PC-9 (cell line): ENCODE measurements at regions of chr5 and their contacts with region 1.

Region 1: GRCh38 chr5:32852535-32852934 is 141.4 kb downstream of the NPR3 start:
- DNase-seq: peak in 1 of 2 experiments; percentile 91
- H3K4me3 ChIP-seq: no peak overlapping the region
- H3K27ac ChIP-seq: no peak overlapping the region
- H3K4me1 ChIP-seq: peaks cover 6% of the 10 kb centered on the region; the same call in 1 of the 2 replicates
- H3K27me3 ChIP-seq: peaks cover 10% of the 10 kb centered on the region; the same call in 1 of the 2 replicates
- CTCF ChIP-seq: peak; percentile 66

Region 2: GRCh38 chr5:32642276-32643002 is 210.1 kb before region 1 on chr5:
- CTCF ChIA-PET with region 1: no interaction called
- POLR2A ChIA-PET with region 1: no interaction called
- intact Hi-C with region 1: loop called (anchors 2 kb)
- DNase-seq: peak in 1 of 2 experiments; percentile 79
- H3K4me3 ChIP-seq: peak overlapping the region; percentile 28
- H3K27ac ChIP-seq: peak overlapping the region; percentile 39
- H3K4me1 ChIP-seq: peaks cover 22% of the 10 kb centered on the region
- H3K27me3 ChIP-seq: no peaks in the 10 kb centered on the region
- CTCF ChIP-seq: no peak

Region 3: DNA sequence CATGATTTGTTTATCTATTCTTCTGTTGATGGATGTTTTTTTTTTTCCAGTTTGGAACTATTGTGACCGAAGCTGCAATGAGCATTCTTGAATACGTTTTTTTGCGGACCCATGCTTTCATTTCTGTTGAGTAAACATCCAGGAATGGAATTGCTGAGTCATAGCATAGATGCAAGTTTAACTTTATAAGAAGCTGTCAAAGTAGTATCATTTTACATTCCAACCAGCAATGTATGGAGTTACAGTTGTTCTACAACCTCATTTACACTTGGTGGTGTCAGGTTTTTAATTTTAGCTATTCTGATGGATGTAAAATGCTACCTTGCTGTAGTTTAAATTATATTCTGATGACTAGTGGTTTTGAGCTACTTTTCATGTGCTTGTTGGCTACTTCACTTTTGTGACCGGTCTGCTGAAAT is 92.4 kb before region 1 on chr5:
- CTCF ChIA-PET with region 1: interaction called, 3 read pairs
- POLR2A ChIA-PET with region 1: no interaction called
- intact Hi-C with region 1: loop called (anchors 1 kb)
- DNase-seq: peak; percentile 38 to 73
- H3K4me3 ChIP-seq: peak overlapping the region; percentile 23; the same call in 1 of the 2 replicates
- H3K27ac ChIP-seq: peak overlapping the region; percentile 53
- H3K4me1 ChIP-seq: peaks cover 17% of the 10 kb centered on the region
- H3K27me3 ChIP-seq: no peaks in the 10 kb centered on the region
- CTCF ChIP-seq: no peak

Region 4: DNA sequence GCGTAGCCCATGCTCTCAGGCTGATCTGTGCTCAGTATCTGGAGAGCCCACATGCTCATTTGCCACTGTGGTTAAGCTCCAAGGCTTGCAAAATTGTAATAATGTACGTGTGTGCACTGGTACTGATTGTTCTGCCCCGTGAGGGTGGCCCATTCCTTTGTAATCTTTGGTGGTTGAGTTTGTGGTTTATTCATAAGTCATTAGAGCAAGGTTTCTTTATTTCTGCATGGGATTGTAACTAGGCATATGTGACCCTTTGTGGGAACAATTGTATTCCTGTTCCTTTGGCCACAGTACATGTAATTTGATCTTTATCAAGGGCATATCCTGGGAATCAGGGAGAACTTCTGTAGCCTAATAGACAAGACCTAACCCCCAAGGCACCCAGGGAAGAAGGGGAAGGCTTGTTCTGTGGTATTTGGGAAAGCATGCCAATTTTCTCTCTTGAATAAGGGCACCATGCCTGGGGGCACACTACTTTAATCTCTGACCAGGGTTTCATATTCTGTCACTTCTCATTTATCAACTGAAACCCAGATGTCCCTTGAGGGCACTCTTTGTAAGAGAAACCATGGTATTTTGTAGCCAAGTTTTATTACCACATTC is 66.8 kb before region 1 on chr5:
- CTCF ChIA-PET with region 1: interaction called, 5 read pairs
- POLR2A ChIA-PET with region 1: no interaction called
- intact Hi-C with region 1: loop called (anchors 1 kb)
- DNase-seq: peak; percentile 91 to 96
- H3K4me3 ChIP-seq: peak overlapping the region; percentile 25; the same call in 1 of the 2 replicates
- H3K27ac ChIP-seq: peak overlapping the region; percentile 77
- H3K4me1 ChIP-seq: peaks cover 28% of the 10 kb centered on the region
- H3K27me3 ChIP-seq: peaks cover 45% of the 10 kb centered on the region
- CTCF ChIP-seq: no peak

Region 5: GRCh38 chr5:33008751-33009418 is 156.3 kb after region 1 on chr5:
- CTCF ChIA-PET with region 1: no interaction called
- POLR2A ChIA-PET with region 1: no interaction called
- intact Hi-C with region 1: loop called (anchors 5 kb)
- DNase-seq: peak; percentile 73 to 92
- H3K4me3 ChIP-seq: no peak overlapping the region
- H3K27ac ChIP-seq: peak overlapping the region; percentile 48
- H3K4me1 ChIP-seq: peaks cover 14% of the 10 kb centered on the region
- H3K27me3 ChIP-seq: no peaks in the 10 kb centered on the region
- CTCF ChIP-seq: no peak

Region 6: DNA sequence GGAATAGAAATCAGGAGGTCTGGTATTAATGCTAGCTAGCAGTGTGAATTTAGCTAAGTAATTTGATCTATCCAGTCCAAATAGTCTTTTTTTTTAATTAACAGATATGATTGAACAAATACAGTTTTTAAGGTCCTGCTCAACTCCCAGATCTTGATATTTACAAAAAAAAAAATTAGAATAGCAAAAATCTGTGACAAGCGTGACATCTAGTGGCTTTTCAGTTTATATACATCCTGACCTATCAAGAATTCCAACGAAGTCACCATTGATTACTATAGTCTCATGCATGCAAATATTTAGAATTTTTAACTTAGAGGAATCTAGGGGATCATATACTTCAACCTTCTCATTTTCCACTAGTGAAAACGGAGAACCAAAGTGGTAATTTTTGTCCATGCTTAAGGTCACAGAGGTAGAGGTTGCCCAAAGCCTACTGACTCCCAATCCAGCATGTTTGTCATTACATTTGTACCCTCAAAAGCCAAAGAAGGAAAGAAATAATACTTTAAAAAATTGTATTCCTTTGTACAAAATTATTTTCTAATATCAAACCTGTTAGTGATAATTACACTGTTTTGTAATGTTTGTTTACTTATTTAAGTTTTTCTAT is 570.6 kb after region 1 on chr5:
- CTCF ChIA-PET with region 1: interaction called, 11 read pairs
- POLR2A ChIA-PET with region 1: no interaction called
- intact Hi-C with region 1: no loop called
- DNase-seq: no peak
- H3K4me3 ChIP-seq: no peak overlapping the region
- H3K27ac ChIP-seq: no peak overlapping the region
- H3K4me1 ChIP-seq: no peaks in the 10 kb centered on the region
- H3K27me3 ChIP-seq: no peaks in the 10 kb centered on the region
- CTCF ChIP-seq: peak; percentile 84